CD8-positive, alpha-beta memory T cell (primary cell): ENCODE measurements at regions of chr4 and their contacts with region 1.

Region 1: GRCh38 chr4:139509727-139510410 is 46.1 kb downstream of the SETD7 start:
- DNase-seq: no peak
- H3K4me3 ChIP-seq: no peak overlapping the region
- H3K4me3 Mint-ChIP-seq: no peak overlapping the region
- H3K27ac ChIP-seq: no peak overlapping the region
- H3K27ac Mint-ChIP-seq: peak overlapping the region in 3 of 8 donors; percentile 5 to 52 (median 50)
- H3K4me1 ChIP-seq: no peaks in the 10 kb centered on the region
- H3K4me1 Mint-ChIP-seq: no peaks in the 10 kb centered on the region
- H3K27me3 ChIP-seq: no peaks in the 10 kb centered on the region
- H3K27me3 Mint-ChIP-seq: peaks cover 0 to 1% of the 10 kb centered on the region in 2 donors

Region 2: GRCh38 chr4:139484783-139485318 is 25.0 kb before region 1 on chr4:
- CTCF ChIA-PET with region 1: no interaction called
- POLR2A ChIA-PET with region 1: interaction called, 14 read pairs
- DNase-seq: no peak
- H3K4me3 ChIP-seq: no peak overlapping the region
- H3K4me3 Mint-ChIP-seq: no peak overlapping the region
- H3K27ac ChIP-seq: no peak overlapping the region
- H3K27ac Mint-ChIP-seq: peak overlapping the region in 1 of 8 donors; percentile 7
- H3K4me1 ChIP-seq: no peaks in the 10 kb centered on the region
- H3K4me1 Mint-ChIP-seq: no peaks in the 10 kb centered on the region
- H3K27me3 ChIP-seq: no peaks in the 10 kb centered on the region
- H3K27me3 Mint-ChIP-seq: no peaks in the 10 kb centered on the region

Region 3: DNA sequence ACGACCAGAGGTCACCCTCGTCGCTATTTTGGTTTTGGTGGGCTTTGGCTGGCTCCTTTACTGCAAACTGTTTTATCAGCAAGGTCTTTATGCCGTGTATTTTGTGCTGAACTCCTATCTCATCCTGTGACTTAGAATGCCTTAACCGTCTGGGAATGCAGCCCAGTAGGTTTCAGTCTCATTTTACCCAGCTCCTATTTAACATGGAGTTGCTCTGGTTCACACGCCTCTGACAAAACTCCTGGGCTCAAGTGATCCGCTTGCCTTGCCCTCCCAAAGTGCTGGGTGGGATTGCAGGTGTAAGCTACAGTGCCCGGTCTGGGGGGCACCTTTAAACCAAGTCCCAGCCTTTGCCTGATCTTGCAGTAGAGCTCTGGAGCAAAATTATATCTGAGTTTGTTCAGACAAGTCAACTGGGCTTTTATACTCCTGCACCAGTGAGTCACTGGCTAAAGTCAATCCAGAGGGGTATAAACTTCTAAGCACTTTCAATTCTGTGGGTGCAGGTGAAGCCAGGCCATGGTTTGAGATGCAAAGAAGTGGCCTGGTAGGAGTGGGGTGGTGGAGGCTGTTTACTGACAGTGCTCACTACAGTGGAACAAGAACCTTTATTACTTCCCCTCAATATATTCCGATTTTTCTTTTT is 206.0 kb after region 1 on chr4:
- CTCF ChIA-PET with region 1: no interaction called
- POLR2A ChIA-PET with region 1: no interaction called
- DNase-seq: no peak
- H3K4me3 ChIP-seq: no peak overlapping the region
- H3K4me3 Mint-ChIP-seq: no peak overlapping the region
- H3K27ac ChIP-seq: no peak overlapping the region
- H3K27ac Mint-ChIP-seq: no peak overlapping the region
- H3K4me1 ChIP-seq: no peaks in the 10 kb centered on the region
- H3K4me1 Mint-ChIP-seq: no peaks in the 10 kb centered on the region
- H3K27me3 ChIP-seq: no peaks in the 10 kb centered on the region
- H3K27me3 Mint-ChIP-seq: no peaks in the 10 kb centered on the region